ENCODE measurements at regions of chr10 and their contacts with region 1.

Region 1: DNA sequence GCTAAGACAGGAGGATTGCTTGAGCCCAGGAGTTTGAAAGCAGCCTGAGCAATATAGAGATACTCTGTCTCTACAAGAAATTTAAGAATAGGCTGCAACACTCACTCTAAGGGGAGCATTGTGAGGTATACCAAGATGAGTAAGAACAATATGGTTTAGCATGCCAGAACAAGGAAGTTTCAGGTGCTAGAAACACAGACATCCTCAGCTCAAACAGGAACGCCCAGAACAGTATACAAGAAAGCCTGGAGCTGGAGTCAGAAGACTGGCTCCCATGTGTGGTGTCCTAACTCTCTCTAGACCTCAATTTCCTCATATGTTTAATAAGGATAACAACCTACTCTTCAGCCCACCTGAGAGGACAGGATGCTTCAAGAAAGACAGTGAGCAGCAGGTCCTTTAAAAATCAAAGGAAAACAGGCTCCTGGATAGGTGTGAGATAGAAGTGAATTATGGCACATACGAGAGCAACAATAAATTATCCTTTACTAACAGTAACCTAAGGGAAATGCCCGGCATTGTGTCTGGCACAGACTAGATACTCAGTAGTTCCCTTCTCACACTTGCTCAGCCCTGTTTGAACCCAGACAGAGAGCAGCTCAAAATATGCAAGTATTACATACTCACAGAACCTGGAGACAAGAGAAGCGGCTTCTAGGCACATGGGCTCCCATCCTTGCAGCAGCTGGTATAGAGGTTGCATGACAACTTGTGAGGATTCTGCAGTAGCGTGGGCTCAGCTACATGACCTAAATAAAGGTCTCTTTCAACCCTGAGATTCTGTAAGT is 45.4 kb downstream of the KAT6B start:
- DNase-seq: peak; percentile 72
- ATAC-seq: peak; percentile 96
- H3K4me3 ChIP-seq: peak overlapping the region; percentile 37; the same call in 1 of the 2 replicates
- H3K27ac ChIP-seq: peak overlapping the region; percentile 61
- H3K4me1 ChIP-seq: peaks cover 32% of the 10 kb centered on the region
- H3K27me3 ChIP-seq: no peaks in the 10 kb centered on the region
- CTCF ChIP-seq: no peak
- EP300 ChIP-seq: peak in 1 of 2 experiments; percentile 56; a peak in 1 of 4 replicates
- POLR2A ChIP-seq: no peak
- RAD21 ChIP-seq: no peak; the same call in 1 of the 2 replicates

Region 2: DNA sequence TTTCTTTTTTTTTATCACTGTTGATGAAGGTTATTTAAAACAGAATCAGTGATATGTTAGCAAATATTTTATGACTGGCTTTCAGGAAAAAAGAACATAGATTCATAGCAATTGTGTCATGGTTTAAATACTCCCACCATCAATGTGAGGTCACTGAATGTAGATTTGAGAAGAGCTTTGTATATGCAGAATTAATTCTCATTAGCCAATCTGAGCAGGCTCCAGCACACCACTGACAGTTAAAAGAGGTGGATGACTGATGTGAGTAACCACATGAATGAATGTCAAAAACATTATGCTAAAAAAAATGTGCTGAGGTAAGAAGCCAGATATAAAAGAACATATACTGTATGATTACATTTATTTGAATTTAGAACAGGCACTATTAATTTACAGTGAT is 220.2 kb before region 1 on chr10:
- CTCF ChIA-PET with region 1: no interaction called
- POLR2A ChIA-PET with region 1: no interaction called
- RAD21 ChIA-PET with region 1: no interaction called
- SMC1A ChIA-PET with region 1: no interaction called
- in situ Hi-C with region 1: no loop called
- intact Hi-C with region 1: no loop called
- DNase-seq: no peak
- ATAC-seq: no peak
- H3K4me3 ChIP-seq: no peak overlapping the region
- H3K27ac ChIP-seq: no peak overlapping the region
- H3K4me1 ChIP-seq: no peaks in the 10 kb centered on the region
- H3K27me3 ChIP-seq: no peaks in the 10 kb centered on the region
- CTCF ChIP-seq: no peak
- EP300 ChIP-seq: no peak
- POLR2A ChIP-seq: no peak
- RAD21 ChIP-seq: no peak

Region 3: DNA sequence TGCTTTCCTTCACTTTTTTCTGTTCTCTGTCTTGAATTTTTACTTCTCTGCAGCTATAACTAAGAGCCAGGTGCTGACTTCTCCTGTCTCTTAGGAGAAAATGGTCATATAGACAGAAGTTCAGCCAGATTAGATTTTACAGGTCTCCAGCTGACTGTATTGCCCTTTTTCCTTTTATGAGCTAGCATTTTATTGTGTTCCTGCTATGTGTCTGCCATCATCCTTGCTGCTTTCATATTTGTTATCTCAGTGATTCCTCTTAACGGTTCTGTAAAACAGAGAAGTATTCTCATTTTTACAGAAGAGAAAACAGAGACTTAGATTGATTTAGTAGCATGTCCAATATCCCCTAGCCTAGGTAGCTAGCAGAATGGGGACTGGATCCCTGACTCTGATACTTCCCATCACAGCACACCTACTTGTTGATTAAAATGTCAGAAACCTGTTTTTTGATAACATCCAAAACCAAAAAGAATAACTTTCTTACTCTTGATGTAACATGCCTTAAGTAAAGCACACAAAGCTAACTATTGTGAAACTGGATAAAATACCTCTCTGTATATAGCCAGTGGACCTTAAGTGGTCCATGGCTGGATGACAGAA is 40.2 kb before region 1 on chr10:
- CTCF ChIA-PET with region 1: interaction called, 4 read pairs
- POLR2A ChIA-PET with region 1: interaction called, 3 read pairs
- RAD21 ChIA-PET with region 1: interaction called, 4 read pairs
- SMC1A ChIA-PET with region 1: interaction called, 10 read pairs
- in situ Hi-C with region 1: no loop called
- intact Hi-C with region 1: no loop called
- DNase-seq: no peak
- ATAC-seq: no peak
- H3K4me3 ChIP-seq: peak overlapping the region; percentile 41; the same call in 1 of the 2 replicates
- H3K27ac ChIP-seq: peak overlapping the region; percentile 58
- H3K4me1 ChIP-seq: peaks cover 21% of the 10 kb centered on the region
- H3K27me3 ChIP-seq: no peaks in the 10 kb centered on the region
- CTCF ChIP-seq: no peak
- EP300 ChIP-seq: no peak
- POLR2A ChIP-seq: no peak
- RAD21 ChIP-seq: no peak

Region 4: GRCh38 chr10:74842301-74842954 is 29.4 kb before region 1 on chr10:
- CTCF ChIA-PET with region 1: interaction called, 3 read pairs
- POLR2A ChIA-PET with region 1: interaction called, 3 read pairs
- RAD21 ChIA-PET with region 1: interaction called, 6 read pairs
- SMC1A ChIA-PET with region 1: interaction called, 175 read pairs
- in situ Hi-C with region 1: no loop called
- intact Hi-C with region 1: no loop called
- DNase-seq: no peak
- ATAC-seq: peak; percentile 68
- H3K4me3 ChIP-seq: no peak overlapping the region
- H3K27ac ChIP-seq: no peak overlapping the region
- H3K4me1 ChIP-seq: no peaks in the 10 kb centered on the region
- H3K27me3 ChIP-seq: no peaks in the 10 kb centered on the region
- CTCF ChIP-seq: no peak
- EP300 ChIP-seq: no peak
- POLR2A ChIP-seq: no peak
- RAD21 ChIP-seq: no peak

Region 5: GRCh38 chr10:74855027-74855426 is 16.8 kb before region 1 on chr10:
- CTCF ChIA-PET with region 1: interaction called, 10 read pairs
- POLR2A ChIA-PET with region 1: interaction called, 11 read pairs
- RAD21 ChIA-PET with region 1: interaction called, 37 read pairs
- SMC1A ChIA-PET with region 1: interaction called, 175 read pairs
- in situ Hi-C with region 1: no loop called
- intact Hi-C with region 1: no loop called
- DNase-seq: no peak
- ATAC-seq: peak; percentile 83
- H3K4me3 ChIP-seq: peak overlapping the region; percentile 22; the same call in 1 of the 2 replicates
- H3K27ac ChIP-seq: peak overlapping the region; percentile 82
- H3K4me1 ChIP-seq: peaks cover 19% of the 10 kb centered on the region
- H3K27me3 ChIP-seq: no peaks in the 10 kb centered on the region
- CTCF ChIP-seq: no peak
- EP300 ChIP-seq: no peak
- POLR2A ChIP-seq: 0 out of 2 replicates have a peak, but pooled peaks have one; percentile 20
- RAD21 ChIP-seq: no peak

Measured in GM12878 (cell line).